ENCODE measurements at regions of chr2 and their contacts with region 1.

Region 1: DNA sequence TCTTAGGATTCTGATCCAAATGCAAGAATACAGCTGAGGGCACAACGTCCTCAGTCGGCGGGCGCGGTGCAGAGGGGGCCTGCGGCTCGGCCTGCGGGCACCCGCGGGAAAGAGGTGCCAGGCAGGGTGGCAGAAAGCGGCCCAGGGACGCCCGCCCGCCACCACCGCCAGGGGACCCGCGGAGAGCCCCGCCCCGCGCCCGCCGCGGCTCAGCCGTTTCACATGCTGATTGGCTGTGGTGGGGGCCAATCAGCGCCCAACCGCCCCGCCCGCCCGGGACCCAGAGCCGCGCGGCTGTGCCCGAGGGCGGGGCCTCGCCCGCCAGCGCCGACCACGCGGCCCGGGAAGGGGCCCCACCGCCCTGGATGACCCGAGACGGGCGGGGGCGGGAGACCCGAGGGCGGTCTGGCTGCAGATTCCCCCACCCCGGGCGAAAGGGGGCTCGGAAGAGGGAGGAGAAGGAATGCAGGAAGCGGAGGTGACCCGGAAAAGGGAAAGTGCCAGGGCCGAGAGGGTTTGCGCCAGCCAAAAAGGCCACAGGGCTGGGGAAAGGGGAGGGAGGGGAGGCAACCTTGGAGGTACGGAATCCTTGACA is 8.0 kb downstream of the IRS1 start:
- DNase-seq: peak; percentile 98
- H3K4me3 Mint-ChIP-seq: peak overlapping the region; percentile 98
- H3K27ac Mint-ChIP-seq: peak overlapping the region; percentile 100
- H3K4me1 Mint-ChIP-seq: peaks cover 48% of the 10 kb centered on the region
- H3K27me3 Mint-ChIP-seq: no peaks in the 10 kb centered on the region

Region 2: DNA sequence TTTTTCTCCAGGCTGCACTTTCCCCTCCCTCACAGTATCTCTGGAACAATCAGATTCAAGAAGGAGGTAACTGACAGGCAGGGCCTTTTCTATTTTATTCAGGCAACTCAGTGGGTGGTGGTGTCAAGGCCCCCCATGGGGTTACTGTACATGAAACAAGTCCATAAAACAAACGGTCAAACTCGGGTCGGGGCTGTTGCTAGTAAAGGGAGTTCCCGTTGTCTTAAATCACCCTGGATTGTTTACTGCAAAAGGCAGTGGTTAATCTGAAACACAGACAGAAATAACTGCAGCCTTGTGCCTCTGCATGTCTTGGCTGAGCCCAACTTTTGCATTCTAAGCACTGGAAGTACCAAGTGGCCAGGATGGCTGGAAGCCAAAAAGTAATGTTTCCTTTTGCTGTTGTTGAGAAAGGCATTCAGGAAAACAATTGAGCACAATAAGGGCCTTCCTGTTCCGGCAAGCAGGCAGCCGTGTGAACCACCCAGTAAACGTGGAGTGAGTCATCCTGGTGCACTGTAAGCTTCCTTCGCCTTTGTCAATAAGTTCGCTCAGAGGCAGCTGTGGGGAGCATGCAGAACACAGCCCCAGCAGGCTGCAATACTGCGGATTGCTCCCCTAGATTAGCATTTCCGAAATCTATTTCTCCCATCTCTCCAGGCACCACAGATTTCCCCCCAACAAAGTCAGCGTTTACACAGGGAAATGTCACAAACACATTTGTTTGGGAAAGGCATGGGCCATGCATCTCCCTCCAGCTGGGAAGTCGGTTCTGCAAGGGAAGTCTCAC is 141.5 kb before region 1 on chr2:
- intact Hi-C with region 1: loop called (anchors 2 kb)
- DNase-seq: peak; percentile 89
- H3K4me3 Mint-ChIP-seq: peak overlapping the region; percentile 71
- H3K27ac Mint-ChIP-seq: peak overlapping the region; percentile 94
- H3K4me1 Mint-ChIP-seq: peaks cover 42% of the 10 kb centered on the region
- H3K27me3 Mint-ChIP-seq: no peaks in the 10 kb centered on the region

Region 3: DNA sequence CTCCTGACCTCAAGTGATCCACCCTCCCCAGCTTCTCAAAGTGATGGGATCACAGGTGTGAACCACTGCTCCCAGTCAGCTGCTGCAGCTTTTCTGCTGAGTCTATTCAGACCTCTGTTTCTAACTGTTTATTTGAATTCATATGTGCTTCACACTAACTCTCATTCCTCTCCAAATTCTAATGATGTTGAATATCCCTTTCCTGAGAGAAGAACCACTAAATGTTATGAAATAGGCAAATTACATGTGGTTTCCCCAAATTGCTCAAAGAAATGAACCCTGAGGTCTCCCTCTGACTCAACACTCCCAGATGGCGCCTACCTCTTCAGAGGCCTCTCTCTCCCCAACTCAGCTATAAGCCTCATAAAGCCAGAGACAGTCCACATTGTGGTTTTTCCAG is 90.5 kb before region 1 on chr2:
- intact Hi-C with region 1: loop called (anchors 5 kb)
- DNase-seq: no peak
- H3K4me3 Mint-ChIP-seq: no peak overlapping the region
- H3K27ac Mint-ChIP-seq: no peak overlapping the region
- H3K4me1 Mint-ChIP-seq: peaks cover 7% of the 10 kb centered on the region
- H3K27me3 Mint-ChIP-seq: peaks cover 13% of the 10 kb centered on the region

Region 4: GRCh38 chr2:226716126-226716525 is 75.5 kb before region 1 on chr2:
- intact Hi-C with region 1: loop called (anchors 5 kb)
- DNase-seq: peak; percentile 65
- H3K4me3 Mint-ChIP-seq: no peak overlapping the region
- H3K27ac Mint-ChIP-seq: peak overlapping the region; percentile 36
- H3K4me1 Mint-ChIP-seq: peaks cover 12% of the 10 kb centered on the region
- H3K27me3 Mint-ChIP-seq: peaks cover 19% of the 10 kb centered on the region

Region 5: GRCh38 chr2:226772389-226773179 is 19.0 kb before region 1 on chr2:
- intact Hi-C with region 1: loop called (anchors 1 kb)
- DNase-seq: peak; percentile 68
- H3K4me3 Mint-ChIP-seq: peak overlapping the region; percentile 57
- H3K27ac Mint-ChIP-seq: no peak overlapping the region
- H3K4me1 Mint-ChIP-seq: peaks cover 26% of the 10 kb centered on the region
- H3K27me3 Mint-ChIP-seq: no peaks in the 10 kb centered on the region

Region 6: DNA sequence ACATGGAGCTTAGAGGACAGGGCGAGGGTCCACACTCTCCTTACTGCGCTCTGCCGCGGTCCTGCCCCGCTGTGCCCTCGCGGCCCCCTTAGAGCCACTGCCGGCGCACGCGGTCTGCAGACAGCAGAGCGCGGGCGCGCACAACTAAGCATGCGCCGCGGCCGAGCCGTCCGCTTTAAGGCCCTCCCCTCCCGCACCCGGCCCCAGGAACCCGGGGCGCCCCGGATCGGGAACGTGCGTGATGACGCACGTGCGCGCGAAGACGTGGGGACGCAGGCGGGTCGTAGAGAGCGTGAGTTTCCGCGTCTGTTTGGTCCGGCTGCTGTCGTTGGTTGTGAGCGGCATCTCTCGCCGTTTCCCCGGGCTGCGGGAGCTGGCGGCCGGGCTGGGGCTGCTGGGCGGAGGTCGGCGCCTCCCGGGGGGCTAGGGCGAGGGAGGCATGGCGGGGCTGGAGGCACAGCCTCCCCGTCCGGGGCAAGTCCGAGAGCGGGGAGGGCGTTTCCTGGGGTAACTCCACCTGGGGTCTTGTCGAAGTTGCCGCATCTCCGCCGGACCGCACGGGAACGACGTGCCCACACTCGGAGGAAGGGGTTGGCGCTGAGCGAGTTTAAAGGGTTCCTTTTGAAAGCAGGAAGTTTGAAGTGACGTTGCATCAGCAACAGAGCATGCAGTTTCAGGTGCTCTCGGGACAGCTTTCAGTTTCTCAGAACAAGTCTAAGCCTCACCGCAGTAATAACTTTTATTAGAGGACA is 44.4 kb after region 1 on chr2 and contains the start of gene RHBDD1:
- intact Hi-C with region 1: loop called (anchors 1 kb)
- DNase-seq: peak; percentile 98
- H3K4me3 Mint-ChIP-seq: peak within 1 kb of the TSS; percentile 95
- H3K27ac Mint-ChIP-seq: peak within 1 kb of the TSS; percentile 97
- H3K4me1 Mint-ChIP-seq: peaks cover 54% of the 10 kb centered on the region
- H3K27me3 Mint-ChIP-seq: no peaks in the 10 kb centered on the region
- total RNA-seq, gene RHBDD1: 41.3 and 44.7 TPM in 2 replicates

Region 7: GRCh38 chr2:227324995-227325838 is 533.6 kb after region 1 on chr2 and contains the start of gene MFF:
- intact Hi-C with region 1: loop called (anchors 10 kb)
- DNase-seq: peak; percentile 97
- H3K4me3 Mint-ChIP-seq: peak within 1 kb of the TSS; percentile 94
- H3K27ac Mint-ChIP-seq: peak within 1 kb of the TSS; percentile 95
- H3K4me1 Mint-ChIP-seq: peaks cover 32% of the 10 kb centered on the region
- H3K27me3 Mint-ChIP-seq: peaks cover 6% of the 10 kb centered on the region
- total RNA-seq, gene MFF: 69.5 and 71.6 TPM in 2 replicates

Measured in activated CD4-positive, alpha-beta T cell treated with anti-CD3 and anti-CD28 coated beads, Interleukin-2, amount 10 ng/mL, durations not matched to agents 24 days and 14 days (primary cell).